ENCODE measurements at regions of chr7 and their contacts with region 1.

Region 1: GRCh38 chr7:51162724-51163329 is 153.8 kb downstream of the COBL start:
- DNase-seq: peak; percentile 78
- H3K4me3 Mint-ChIP-seq: no peak overlapping the region
- H3K27ac Mint-ChIP-seq: no peak overlapping the region
- H3K4me1 Mint-ChIP-seq: peaks cover 9% of the 10 kb centered on the region
- H3K27me3 Mint-ChIP-seq: peaks cover 32% of the 10 kb centered on the region

Region 2: GRCh38 chr7:50092579-50093491 is 1070.0 kb before region 1 on chr7 and contains the start of gene ZPBP:
- CTCF ChIA-PET with region 1: interaction called, 19 read pairs
- POLR2A ChIA-PET with region 1: no interaction called
- DNase-seq: peak; percentile 43
- H3K4me3 Mint-ChIP-seq: peak within 1 kb of the TSS; percentile 73
- H3K27ac Mint-ChIP-seq: peak within 1 kb of the TSS; percentile 47
- H3K4me1 Mint-ChIP-seq: peaks cover 4% of the 10 kb centered on the region
- H3K27me3 Mint-ChIP-seq: peaks cover 19% of the 10 kb centered on the region
- total RNA-seq, gene ZPBP: not detected

Region 3: GRCh38 chr7:51187941-51188340 is 25.1 kb after region 1 on chr7:
- CTCF ChIA-PET with region 1: interaction called, 12 read pairs
- POLR2A ChIA-PET with region 1: no interaction called
- DNase-seq: no peak
- H3K4me3 Mint-ChIP-seq: no peak overlapping the region
- H3K27ac Mint-ChIP-seq: no peak overlapping the region
- H3K4me1 Mint-ChIP-seq: no peaks in the 10 kb centered on the region
- H3K27me3 Mint-ChIP-seq: peaks cover 4% of the 10 kb centered on the region

Region 4: GRCh38 chr7:51366930-51367613 is 204.2 kb after region 1 on chr7:
- CTCF ChIA-PET with region 1: interaction called, 46 read pairs
- POLR2A ChIA-PET with region 1: no interaction called
- DNase-seq: no peak
- H3K4me3 Mint-ChIP-seq: no peak overlapping the region
- H3K27ac Mint-ChIP-seq: no peak overlapping the region
- H3K4me1 Mint-ChIP-seq: no peaks in the 10 kb centered on the region
- H3K27me3 Mint-ChIP-seq: no peaks in the 10 kb centered on the region